ENCODE measurements at regions of chrX and their contacts with region 1.

Region 1: GRCh38 chrX:53317365-53318069 is 36.1 kb upstream of the IQSEC2 start:
- DNase-seq: peak; percentile 61
- H3K4me3 Mint-ChIP-seq: no peak overlapping the region
- H3K27ac Mint-ChIP-seq: no peak overlapping the region
- H3K4me1 Mint-ChIP-seq: peaks cover 18% of the 10 kb centered on the region
- H3K27me3 Mint-ChIP-seq: peaks cover 34% of the 10 kb centered on the region

Region 2: GRCh38 chrX:53284684-53285447 is 32.7 kb before region 1 on chrX:
- CTCF ChIA-PET with region 1: interaction called, 12 read pairs
- POLR2A ChIA-PET with region 1: no interaction called
- DNase-seq: peak; percentile 50
- H3K4me3 Mint-ChIP-seq: no peak overlapping the region
- H3K27ac Mint-ChIP-seq: no peak overlapping the region
- H3K4me1 Mint-ChIP-seq: peaks cover 28% of the 10 kb centered on the region
- H3K27me3 Mint-ChIP-seq: no peaks in the 10 kb centered on the region

Region 3: DNA sequence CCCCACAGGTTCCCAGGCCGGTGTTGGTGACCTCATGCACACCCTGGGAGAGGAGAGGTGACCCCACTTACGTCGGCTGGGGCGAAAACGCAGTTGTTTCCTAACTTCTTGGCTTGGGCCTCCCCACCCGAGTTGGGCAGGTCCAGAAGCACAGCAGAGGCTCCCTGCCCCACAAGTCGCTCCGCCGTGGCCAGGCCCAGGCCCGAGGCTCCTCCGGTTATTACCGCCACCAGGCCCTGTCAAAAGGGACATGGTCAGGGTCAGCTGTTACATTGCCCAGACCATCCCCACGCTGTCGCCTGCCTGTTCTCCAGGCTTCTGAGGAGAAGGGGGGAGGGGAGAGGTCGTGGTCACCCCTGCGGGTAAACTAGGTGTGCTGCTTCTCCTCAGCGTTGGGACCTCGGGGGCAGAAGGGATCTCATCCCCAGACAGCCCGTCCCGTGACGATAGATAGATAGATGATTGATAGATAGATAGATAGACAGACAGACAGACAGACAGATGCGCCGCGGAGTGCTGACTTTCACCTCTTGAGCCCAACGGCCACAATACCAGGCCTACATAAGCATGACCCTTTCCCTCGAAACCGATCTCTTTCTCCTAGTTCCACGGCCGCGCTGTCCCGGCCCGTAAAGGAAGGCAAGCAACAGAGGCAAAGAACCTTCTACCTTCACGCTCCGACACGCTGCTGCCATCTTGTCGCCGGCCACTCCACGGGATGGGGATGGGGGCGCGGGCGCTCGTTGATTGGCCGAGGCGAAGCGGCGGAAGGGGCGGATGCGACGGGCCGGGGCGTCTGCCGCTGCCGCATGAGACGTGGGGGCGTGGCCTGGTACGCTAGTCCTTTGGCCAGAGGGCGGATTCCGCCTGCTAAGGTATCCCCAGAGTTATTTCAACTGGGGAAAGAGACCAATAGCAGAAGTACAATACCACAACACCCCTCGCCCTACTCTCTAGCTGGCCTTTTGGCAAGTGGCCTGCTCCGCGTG is 116.4 kb after region 1 on chrX and contains the start of gene HSD17B10:
- CTCF ChIA-PET with region 1: interaction called, 10 read pairs
- POLR2A ChIA-PET with region 1: no interaction called
- DNase-seq: peak; percentile 89
- H3K4me3 Mint-ChIP-seq: peak within 1 kb of the TSS; percentile 97
- H3K27ac Mint-ChIP-seq: peak within 1 kb of the TSS; percentile 89
- H3K4me1 Mint-ChIP-seq: peaks cover 49% of the 10 kb centered on the region
- H3K27me3 Mint-ChIP-seq: no peaks in the 10 kb centered on the region
- total RNA-seq, gene HSD17B10: 73.2 to 74.0 TPM

Region 4: DNA sequence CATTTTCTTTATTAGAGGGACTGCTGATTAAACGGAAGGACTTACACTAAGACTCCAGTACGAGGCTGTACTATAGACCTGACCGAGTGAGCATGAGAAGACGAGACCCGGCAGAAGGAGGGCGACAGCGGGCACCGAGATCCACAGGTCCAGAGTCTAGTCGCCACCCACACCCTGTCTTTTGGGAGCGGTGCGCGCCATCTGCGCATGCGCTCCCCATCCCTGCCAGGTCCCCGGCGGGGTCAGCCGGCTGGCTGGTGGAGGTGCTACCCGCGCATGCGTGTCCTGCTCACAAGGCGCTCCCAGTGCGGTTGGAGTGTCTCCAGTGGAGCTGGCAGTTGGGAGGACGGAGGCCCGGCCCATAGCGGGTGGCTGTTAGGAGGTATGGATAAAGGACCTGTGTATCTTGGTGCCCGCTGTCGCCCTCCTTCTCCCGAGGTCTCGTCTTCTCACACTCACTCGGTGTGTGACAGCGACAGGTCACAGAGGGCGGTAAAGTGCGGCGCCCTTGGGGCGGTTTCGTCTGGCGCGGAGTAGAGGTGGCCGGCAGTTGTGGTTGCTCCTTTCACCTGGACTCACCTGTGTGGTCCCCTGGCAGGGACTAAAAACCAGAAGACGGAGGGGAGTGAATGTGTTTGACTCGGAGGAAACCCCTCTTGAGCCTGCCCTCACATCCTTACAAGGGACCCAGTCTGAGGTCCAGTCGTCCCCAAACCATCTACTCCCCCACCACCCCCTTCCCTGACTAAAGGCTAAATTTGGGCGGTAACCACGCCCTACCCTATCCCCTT is 124.2 kb after region 1 on chrX:
- CTCF ChIA-PET with region 1: interaction called, 54 read pairs
- POLR2A ChIA-PET with region 1: no interaction called
- DNase-seq: peak; percentile 83
- H3K4me3 Mint-ChIP-seq: peak overlapping the region; percentile 76
- H3K27ac Mint-ChIP-seq: peak overlapping the region; percentile 70
- H3K4me1 Mint-ChIP-seq: peaks cover 41% of the 10 kb centered on the region
- H3K27me3 Mint-ChIP-seq: no peaks in the 10 kb centered on the region

Region 5: DNA sequence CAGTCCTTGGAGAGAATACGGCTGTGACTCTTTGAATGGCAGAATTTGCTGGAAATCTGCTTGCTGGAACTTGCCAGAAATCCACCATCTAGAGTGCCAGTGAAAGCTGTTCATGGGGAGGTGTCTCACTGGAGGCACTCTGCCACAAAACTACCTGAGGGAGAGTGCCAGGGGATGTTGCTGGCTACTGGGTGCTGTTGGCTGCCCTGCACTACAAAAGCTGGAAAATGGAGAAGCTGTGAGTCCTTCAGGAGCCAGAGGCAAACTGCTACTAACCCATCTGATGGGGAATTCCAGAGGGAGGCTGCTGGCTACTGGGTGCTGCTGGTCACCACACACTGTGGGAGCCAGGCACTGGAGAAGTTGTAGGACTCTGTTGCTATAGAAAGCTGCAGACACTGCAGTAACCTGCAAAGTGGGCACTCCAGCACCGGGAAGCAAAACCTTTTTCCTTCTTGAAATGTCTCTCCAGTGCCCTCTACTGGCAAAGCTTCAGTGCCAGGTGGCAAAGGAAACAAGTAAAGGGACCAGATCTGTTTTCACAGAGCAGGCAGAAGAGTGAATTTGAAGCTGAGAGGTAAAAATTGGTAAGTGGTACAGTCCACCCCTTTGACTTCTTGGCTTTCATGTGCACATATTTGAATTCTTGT is 164.4 kb after region 1 on chrX:
- CTCF ChIA-PET with region 1: interaction called, 31 read pairs
- POLR2A ChIA-PET with region 1: no interaction called
- DNase-seq: peak; percentile 54
- H3K4me3 Mint-ChIP-seq: no peak overlapping the region
- H3K27ac Mint-ChIP-seq: no peak overlapping the region
- H3K4me1 Mint-ChIP-seq: no peaks in the 10 kb centered on the region
- H3K27me3 Mint-ChIP-seq: peaks cover 4% of the 10 kb centered on the region

Region 6: GRCh38 chrX:53831662-53832635 is 514.4 kb after region 1 on chrX:
- CTCF ChIA-PET with region 1: no interaction called
- POLR2A ChIA-PET with region 1: no interaction called
- DNase-seq: peak; percentile 51
- H3K4me3 Mint-ChIP-seq: no peak overlapping the region
- H3K27ac Mint-ChIP-seq: no peak overlapping the region
- H3K4me1 Mint-ChIP-seq: peaks cover 18% of the 10 kb centered on the region
- H3K27me3 Mint-ChIP-seq: no peaks in the 10 kb centered on the region